Mucosa of descending colon (tissue), 3 donors: ENCODE measurements at regions of chr9 and their contacts with region 1.

Region 1: DNA sequence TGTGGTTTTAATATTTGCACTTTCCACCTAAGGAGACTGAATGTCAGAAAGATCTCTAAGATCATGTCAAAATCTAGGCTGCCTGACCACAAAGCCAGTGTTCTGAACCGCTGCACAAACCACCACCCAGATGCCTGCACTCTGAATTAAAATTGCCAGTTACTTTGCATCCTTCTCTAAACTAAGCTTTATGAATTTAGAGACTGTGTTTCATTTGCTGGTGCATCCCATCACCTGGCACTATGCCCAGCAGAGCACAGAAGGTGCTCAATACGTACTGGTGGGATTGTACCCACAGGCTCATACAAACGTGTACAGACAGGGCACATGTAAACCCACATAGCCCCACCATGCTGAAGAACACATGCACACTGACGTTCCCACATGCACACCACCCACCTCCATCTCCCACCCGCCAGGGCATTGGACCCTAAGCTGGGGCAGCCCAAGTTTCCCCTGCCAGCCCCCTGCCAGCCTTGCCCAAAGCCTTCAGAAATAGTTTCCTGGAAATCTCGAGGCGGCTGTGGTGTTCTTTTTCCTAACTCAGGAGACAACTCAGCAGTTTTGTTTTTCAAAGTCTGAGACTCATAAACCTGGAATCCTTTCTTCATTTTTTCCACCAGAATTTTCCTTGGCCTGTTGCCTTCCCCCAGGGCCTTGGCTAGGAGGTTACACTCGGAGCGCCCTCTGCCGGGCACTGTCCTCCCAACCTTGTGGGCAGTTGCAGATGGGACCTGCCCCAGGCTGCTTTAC is 9.6 kb upstream of the TRAF1 start:
- DNase-seq: peak; percentile 94 to 99 (median 96)
- ATAC-seq: peak; percentile 90
- H3K4me3 ChIP-seq: no peak overlapping the region
- H3K4me1 ChIP-seq: peaks cover 17% of the 10 kb centered on the region
- CTCF ChIP-seq: peak; percentile 82

Region 2: DNA sequence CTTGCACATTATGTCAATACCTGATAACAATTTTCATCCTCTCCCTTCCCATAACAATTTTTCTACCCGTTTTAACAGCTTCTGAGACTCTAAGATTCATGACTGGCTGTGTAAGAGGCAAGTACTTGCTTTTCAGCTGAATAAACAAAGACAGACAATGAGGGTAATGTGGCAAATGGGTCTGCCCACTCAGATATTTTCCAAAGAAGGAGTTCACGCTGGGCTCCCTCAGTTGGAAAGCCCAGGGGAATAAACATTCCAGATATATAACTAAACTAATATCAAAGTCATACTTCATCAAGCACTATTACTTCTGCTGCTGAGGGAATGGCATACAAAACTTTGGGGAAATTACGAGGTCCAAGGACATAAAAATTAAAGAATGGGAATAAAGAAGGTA is 246.3 kb before region 1 on chr9:
- intact Hi-C with region 1: no loop called
- DNase-seq: no peak
- ATAC-seq: no peak
- H3K4me3 ChIP-seq: no peak overlapping the region
- H3K4me1 ChIP-seq: no peaks in the 10 kb centered on the region
- CTCF ChIP-seq: no peak

Region 3: GRCh38 chr9:120755827-120756434 is 180.3 kb before region 1 on chr9:
- intact Hi-C with region 1: loop called (anchors 2 to 5 kb)
- DNase-seq: peak in 1 of 3 donors; percentile 85
- ATAC-seq: peak; percentile 76
- H3K4me3 ChIP-seq: no peak overlapping the region
- H3K4me1 ChIP-seq: no peaks in the 10 kb centered on the region
- CTCF ChIP-seq: no peak

Region 4: GRCh38 chr9:120875954-120876841 is 60.0 kb before region 1 on chr9:
- intact Hi-C with region 1: loop called (anchors 5 kb)
- DNase-seq: peak; percentile 83 to 92 (median 90)
- ATAC-seq: peak; percentile 82
- H3K4me3 ChIP-seq: peak overlapping the region; percentile 50
- H3K4me1 ChIP-seq: peaks cover 5% of the 10 kb centered on the region
- CTCF ChIP-seq: no peak